ENCODE measurements at regions of chr15 and their contacts with region 1.

Region 1: DNA sequence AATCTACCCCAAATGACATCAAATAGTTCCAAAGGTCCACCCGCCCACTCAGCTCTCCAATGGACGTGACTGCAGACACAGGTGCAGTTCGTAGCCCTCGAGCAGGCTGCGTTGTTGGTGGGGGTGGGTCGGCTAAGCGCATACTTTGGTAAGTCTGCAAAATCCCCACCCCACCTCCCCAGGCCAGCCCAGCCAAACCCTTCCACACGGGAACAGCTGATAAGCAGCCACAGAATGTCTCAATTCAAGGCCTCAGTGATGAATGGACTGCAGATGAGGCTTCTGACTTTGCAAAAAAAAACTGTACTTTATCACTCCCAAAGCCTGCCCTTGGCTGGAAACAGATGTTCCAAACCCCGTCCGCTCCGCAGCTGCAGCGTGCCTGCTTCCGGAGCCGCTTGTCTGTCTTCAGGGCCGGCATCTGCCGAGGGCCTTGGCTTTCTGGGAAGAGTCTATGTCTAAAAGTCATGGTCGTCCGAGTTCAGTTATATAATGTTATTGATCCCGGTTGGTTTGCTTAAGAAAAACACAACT is 38.2 kb downstream of the PCSK6 start:
- DNase-seq: peak in 3 of 10 donors; percentile 38 to 59 (median 45)
- H3K4me3 ChIP-seq: peak overlapping the region in 3 of 59 donors; percentile 13 to 28 (median 21)
- H3K27ac ChIP-seq: peak overlapping the region in 45 of 59 donors; percentile 6 to 96 (median 61)
- H3K27me3 ChIP-seq: no peaks in the 10 kb centered on the region
- CTCF ChIP-seq: peak in 4 of 56 donors; percentile 13 to 18 (median 18)

Region 2: DNA sequence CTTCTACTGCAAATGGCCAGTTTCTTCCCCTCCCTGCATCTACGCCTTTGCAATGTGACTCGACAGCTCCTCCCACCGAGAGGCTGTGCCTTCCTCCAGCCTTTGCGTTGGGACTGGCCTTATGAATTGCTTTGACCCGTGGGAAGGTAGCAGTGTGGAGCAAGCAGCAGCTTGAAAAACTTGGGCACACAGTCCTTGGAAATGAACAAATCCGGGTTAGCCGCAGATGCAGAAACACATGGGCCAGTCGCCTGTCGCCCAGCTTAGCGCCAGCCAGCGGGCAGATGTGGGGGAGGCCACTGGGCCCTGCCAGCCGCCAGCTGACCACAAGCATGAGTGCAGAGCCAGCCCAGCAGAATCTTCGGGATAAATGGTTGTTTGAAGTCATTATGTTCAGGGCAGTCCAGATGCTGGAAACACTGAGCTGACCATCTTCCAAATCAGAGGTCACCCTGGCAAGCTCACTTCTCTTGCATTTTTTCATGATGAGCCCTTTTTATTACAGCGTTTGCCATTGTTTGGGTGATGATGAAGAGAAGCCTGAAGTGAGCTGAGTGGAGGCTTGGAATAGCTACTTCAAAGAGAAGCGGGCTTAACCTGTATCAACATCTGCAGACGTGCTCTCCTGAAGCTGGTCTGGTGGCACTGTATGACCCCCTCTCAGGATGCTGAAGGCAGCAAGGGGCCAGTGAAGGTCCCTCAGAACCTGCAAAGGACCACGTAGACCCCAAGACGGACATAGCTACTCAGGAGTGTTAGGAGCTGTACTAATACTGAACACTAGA is 183.8 kb before region 1 on chr15:
- intact Hi-C with region 1: no loop called
- DNase-seq: peak in 9 of 10 donors; percentile 38 to 77 (median 65)
- H3K4me3 ChIP-seq: peak overlapping the region in 20 of 59 donors; percentile 1 to 50 (median 17)
- H3K27ac ChIP-seq: peak overlapping the region in 50 of 59 donors; percentile 5 to 85 (median 65)
- H3K27me3 ChIP-seq: no peaks in the 10 kb centered on the region
- CTCF ChIP-seq: peak in 18 of 56 donors; percentile 7 to 44 (median 22)

Region 3: DNA sequence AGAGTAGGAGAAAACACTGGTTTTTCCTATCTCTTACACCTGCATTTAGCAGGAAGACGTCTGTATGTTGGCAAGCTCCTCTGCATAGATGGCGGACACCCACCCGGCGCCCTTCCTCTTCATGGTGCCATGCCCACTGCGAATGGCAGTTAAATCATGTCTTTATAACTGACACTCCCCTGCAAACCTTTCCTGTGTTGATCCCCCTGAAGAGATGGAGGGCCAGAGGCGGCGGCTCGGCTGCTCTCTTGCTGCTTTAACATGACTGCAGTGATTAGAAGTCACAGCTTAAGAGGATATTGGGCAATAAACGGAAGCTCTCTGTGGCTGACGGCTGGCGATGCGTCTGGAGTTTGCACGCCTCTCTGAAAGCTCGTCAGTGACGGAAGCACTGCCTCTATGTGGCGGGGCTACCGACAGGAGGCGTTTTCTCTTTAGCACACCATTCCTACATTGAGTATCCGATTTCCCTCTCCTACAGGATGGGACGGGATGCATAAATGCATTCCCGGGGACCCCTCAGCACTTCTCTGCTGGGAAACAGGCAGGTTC is 130.8 kb before region 1 on chr15:
- intact Hi-C with region 1: no loop called
- DNase-seq: peak in 3 of 10 donors; percentile 21 to 39 (median 34)
- H3K4me3 ChIP-seq: peak overlapping the region in 2 of 59 donors; percentile 8 to 10
- H3K27ac ChIP-seq: no peak overlapping the region
- H3K27me3 ChIP-seq: no peaks in the 10 kb centered on the region
- CTCF ChIP-seq: peak in 5 of 56 donors; percentile 6 to 18 (median 13)

Region 4: DNA sequence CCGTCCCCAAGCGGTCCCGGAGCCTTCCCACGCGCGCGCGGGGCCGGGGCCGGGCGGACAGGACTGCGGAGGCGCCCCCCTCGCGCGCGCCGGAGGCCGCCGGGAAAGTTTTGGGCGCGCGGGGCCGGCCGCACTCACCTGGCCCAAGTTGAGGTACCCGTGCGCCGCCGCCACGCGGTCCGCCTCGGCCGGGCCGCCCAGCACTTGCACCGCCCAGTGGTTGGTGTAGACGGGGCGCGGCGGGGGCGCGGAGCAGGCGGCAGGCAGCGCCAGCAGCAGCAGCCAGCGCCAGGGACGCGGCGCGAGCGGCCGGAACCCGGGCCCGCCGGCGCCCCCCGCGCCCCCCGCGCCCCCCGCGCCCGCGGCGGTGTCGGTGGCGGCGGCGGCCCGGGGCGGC is 37.9 kb after region 1 on chr15:
- intact Hi-C with region 1: loop called in 1 of 2 experiments (anchors 5 kb)
- DNase-seq: peak in 1 of 10 donors; percentile 16
- H3K4me3 ChIP-seq: peak overlapping the region in 45 of 59 donors; percentile 28 to 72 (median 57)
- H3K27ac ChIP-seq: peak overlapping the region in 9 of 59 donors; percentile 35 to 89 (median 79)
- H3K27me3 ChIP-seq: peaks cover 0 to 17% (median 3%) of the 10 kb centered on the region in 45 donors
- CTCF ChIP-seq: peak in 1 of 56 donors; percentile 10